Heart left ventricle (tissue), 16 donors: ENCODE measurements at regions of chr9 and their contacts with region 1.

Region 1: DNA sequence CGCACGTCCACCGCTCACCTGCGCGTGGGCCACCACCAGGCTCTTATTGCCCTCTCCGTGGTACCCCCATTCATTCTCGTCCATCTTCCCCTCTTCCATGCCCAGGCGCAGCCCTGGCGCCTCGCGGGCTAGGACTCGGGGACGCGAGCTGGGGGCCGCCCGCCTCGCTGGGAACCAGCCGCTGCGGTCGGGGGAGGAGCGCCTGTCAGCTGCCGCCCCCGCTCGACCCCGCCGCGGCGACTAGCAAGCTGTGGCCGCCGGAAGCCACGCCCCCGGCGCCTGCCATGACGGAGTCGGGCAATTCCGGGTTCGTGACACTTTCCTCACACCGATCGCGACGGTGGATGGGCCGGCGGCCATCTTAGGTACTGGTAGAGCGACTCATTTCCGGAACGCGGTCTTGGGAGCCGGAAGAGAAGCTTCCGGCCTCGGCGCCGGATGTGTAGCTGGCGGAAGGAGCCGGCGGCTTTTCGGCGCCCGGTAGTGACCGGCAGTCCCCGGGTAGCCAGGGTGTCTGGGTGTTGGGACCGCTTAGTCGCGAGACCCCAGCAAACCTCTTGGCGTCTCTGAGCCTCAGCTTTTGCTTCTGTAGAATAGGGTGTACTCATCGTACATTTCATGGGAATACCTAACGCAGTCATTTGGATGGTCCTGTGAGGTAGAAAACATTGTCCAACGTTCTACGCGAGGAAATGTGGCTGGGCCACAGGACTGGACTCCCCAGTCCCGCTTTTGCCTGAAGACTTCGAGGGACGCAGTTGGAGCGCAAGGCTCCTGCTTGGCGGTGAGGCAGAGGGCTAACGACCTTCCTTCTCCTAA is at the start of gene IPPK:
- DNase-seq: peak; percentile 98 to 100 (median 99)
- ATAC-seq: peak; percentile 94 to 98 (median 96)
- H3K4me3 ChIP-seq: peak within 1 kb of the TSS; percentile 48 to 98 (median 88)
- H3K27ac ChIP-seq: peak within 1 kb of the TSS; percentile 80 to 98 (median 93)
- H3K4me1 ChIP-seq: peaks cover 0 to 48% (median 28%) of the 10 kb centered on the region in 12 donors
- H3K27me3 ChIP-seq: no peaks in the 10 kb centered on the region
- CTCF ChIP-seq: no peak
- POLR2A ChIP-seq: peak; percentile 19 to 64
- total RNA-seq, gene IPPK: 5.8 to 10.1 (median 8.6) TPM

Region 2: DNA sequence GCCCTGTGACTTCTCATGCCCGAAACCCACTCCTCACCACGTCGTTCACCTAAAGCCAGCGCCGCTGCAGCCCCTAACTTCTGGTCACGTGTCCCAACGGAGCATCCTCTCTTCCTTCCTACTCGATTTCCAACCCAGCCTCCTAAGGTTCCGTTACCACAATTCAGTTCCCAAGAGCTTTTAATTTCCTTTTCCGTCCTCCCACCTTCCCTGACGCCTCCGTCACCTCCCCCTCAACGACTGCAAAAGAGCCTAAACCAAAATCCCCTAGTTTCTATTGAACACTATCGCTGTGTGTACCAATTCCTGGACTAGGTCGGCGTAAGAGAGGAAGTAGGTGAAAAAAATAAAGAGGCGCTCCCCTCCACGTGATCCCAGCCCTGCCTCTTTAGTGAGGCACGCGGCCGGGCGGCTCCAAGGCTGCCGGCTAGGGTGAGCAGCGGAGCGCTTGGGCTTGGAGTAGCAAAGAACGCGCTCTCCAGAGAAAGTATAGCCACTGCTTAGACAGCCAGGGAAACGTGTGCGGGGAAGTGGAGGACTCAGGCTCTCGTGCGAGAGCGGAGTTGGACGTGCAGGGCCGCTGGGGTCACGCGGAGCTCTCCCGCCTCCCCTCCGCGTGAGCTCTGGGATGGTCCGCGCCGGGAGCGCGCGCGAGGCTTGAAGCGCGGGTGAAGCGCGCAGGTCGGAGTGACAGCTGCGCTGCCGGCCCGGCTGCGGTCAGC is 344.7 kb before region 1 on chr9 and contains the starts of genes CENPP and NOL8:
- intact Hi-C with region 1: loop called in 2 of 10 experiments (anchors 1 to 10 kb)
- DNase-seq: peak; percentile 86 to 91 (median 87)
- ATAC-seq: peak; percentile 98 to 99 (median 98)
- H3K4me3 ChIP-seq: peak within 1 kb of the TSS; percentile 53 to 90 (median 80)
- H3K27ac ChIP-seq: peak within 1 kb of the TSS; percentile 86 to 99 (median 96)
- H3K4me1 ChIP-seq: peaks cover 0 to 31% (median 16%) of the 10 kb centered on the region in 12 donors
- H3K27me3 ChIP-seq: no peaks in the 10 kb centered on the region
- CTCF ChIP-seq: no peak
- POLR2A ChIP-seq: no peak
- total RNA-seq, gene CENPP: 1.2 to 5.8 (median 3.1) TPM
- total RNA-seq, gene NOL8: 8.1 to 25.6 (median 18.1) TPM

Region 3: DNA sequence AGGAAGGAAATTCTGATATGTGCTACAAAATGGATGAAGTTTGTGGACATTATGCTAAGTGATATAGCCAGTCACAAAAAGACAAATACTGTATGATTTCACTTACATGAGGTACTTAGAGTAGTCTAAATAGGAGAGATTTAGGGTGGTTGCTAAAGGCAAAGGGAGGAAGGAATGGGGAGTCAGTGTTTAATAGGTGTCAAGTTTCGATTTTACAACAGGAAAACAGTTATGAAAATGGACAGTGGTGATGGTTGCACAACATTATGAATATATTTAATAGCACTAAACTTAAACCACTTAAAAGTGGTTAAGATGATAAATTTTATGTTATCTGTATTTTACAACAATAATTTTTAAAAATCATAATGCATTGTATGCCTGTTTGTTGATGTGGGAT is 93.9 kb before region 1 on chr9:
- intact Hi-C with region 1: no loop called
- DNase-seq: no peak
- ATAC-seq: no peak
- H3K4me3 ChIP-seq: no peak overlapping the region
- H3K27ac ChIP-seq: no peak overlapping the region
- H3K4me1 ChIP-seq: no peaks in the 10 kb centered on the region
- H3K27me3 ChIP-seq: no peaks in the 10 kb centered on the region
- CTCF ChIP-seq: no peak
- POLR2A ChIP-seq: no peak

Region 4: DNA sequence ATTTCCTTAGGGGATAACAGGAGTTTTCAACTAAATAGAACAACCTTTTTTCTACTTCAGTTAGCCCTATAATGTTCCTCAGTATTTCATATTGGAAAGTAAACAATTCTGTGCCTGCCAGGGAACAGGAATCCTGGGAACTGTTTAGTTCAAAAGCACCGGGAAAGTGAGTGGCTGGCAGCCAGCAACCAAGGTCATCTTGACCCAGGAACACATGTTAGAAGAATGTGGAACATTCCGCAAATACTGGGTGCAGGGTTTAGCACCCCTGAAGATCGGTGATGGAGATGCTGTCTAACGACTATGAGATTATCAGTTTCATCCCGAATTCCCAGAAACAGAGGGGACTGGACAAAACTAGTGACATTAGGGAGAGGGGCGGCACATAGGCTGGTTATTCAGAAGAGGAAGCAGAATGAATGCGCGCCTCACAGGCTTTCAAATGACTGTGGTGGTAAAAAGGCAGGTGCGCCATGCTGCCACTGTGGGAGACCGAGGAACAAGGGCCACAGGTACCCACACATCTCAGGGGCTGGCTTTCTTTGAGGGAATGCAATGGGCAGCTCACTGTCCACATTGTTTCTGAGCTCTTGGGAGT is 51.4 kb before region 1 on chr9:
- intact Hi-C with region 1: no loop called
- DNase-seq: peak in 2 of 5 donors; percentile 33 to 38
- ATAC-seq: no peak
- H3K4me3 ChIP-seq: no peak overlapping the region
- H3K27ac ChIP-seq: peak overlapping the region in 6 of 12 donors; percentile 24 to 82 (median 69)
- H3K4me1 ChIP-seq: peaks cover 0 to 44% (median 5%) of the 10 kb centered on the region in 12 donors
- H3K27me3 ChIP-seq: no peaks in the 10 kb centered on the region
- CTCF ChIP-seq: no peak
- POLR2A ChIP-seq: no peak

Region 5: DNA sequence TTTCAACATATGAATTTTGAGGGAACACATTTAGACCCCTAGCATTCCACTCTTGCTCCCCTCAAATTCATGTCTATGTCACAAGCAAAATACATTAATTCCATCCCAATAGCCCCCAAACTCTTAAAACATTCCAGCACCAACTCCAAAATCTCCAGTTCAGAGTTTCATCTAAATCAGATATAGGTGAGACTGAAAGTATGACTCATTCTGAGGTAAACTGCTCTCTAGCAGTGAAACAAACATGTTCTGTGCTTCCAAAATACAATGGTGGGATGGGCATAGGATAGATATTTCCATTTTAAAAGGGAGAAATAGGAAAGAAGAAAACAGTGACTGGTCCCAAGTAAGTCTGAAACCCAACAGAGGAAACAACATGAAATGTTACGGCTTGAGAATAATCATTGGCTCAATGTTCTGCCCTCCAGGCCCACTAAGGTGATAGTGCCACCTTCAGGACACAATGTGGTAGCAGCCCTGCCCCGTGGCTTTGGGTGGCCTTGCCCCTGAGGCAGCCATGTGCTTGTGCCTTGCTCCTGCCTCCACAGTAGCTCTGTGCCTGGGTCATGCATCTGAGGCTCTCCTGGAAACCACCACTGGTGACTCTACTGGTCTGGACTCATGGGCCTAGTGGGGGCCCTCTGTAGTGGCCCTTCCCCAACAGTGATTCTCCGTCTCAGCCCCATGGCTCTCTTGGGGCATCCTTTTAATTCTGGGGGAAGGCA is 36.3 kb after region 1 on chr9:
- intact Hi-C with region 1: loop called in 3 of 10 experiments (anchors 5 to 10 kb)
- DNase-seq: peak in 1 of 5 donors; percentile 58
- ATAC-seq: peak in 3 of 4 donors; percentile 53 to 78 (median 72)
- H3K4me3 ChIP-seq: no peak overlapping the region
- H3K27ac ChIP-seq: no peak overlapping the region
- H3K4me1 ChIP-seq: peaks cover 0 to 2% (median 0%) of the 10 kb centered on the region in 12 donors
- H3K27me3 ChIP-seq: no peaks in the 10 kb centered on the region
- CTCF ChIP-seq: peak; percentile 12 to 59 (median 38)
- POLR2A ChIP-seq: no peak